ENCODE measurements at regions of chr12 and their contacts with region 1.

Region 1: GRCh38 chr12:32455607-32456071 is 56.3 kb downstream of the FGD4 start:
- DNase-seq: no peak
- H3K4me3 ChIP-seq: peak overlapping the region in 1 of 2 donors; percentile 13
- H3K27ac ChIP-seq: peak overlapping the region; percentile 14 to 68
- H3K4me1 ChIP-seq: no peaks in the 10 kb centered on the region
- H3K27me3 ChIP-seq: no peaks in the 10 kb centered on the region
- CTCF ChIP-seq: peak; percentile 54 to 72 (median 63)
- POLR2A ChIP-seq: no peak

Region 2: DNA sequence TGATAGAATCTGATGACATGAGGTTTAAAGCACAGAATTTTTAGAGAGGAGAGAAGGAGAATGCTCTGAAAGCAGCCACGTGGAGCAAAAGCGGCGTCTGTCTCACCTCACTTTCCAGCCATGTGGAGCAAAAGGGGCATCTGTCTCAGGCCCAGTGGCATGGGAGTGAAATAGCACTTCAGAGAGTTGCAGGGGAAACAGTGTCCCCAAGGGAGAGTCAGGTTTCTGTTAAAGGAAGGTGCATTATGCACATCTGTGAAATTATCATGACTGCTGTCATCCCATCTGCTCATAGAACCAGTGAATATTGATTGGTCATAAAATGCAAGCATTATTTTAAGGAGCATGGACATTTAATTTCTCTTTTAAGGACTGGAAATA is 225.0 kb before region 1 on chr12:
- intact Hi-C with region 1: no loop called
- DNase-seq: no peak
- H3K4me3 ChIP-seq: no peak overlapping the region
- H3K27ac ChIP-seq: no peak overlapping the region
- H3K4me1 ChIP-seq: no peaks in the 10 kb centered on the region
- H3K27me3 ChIP-seq: no peaks in the 10 kb centered on the region
- CTCF ChIP-seq: no peak
- POLR2A ChIP-seq: no peak

Region 3: DNA sequence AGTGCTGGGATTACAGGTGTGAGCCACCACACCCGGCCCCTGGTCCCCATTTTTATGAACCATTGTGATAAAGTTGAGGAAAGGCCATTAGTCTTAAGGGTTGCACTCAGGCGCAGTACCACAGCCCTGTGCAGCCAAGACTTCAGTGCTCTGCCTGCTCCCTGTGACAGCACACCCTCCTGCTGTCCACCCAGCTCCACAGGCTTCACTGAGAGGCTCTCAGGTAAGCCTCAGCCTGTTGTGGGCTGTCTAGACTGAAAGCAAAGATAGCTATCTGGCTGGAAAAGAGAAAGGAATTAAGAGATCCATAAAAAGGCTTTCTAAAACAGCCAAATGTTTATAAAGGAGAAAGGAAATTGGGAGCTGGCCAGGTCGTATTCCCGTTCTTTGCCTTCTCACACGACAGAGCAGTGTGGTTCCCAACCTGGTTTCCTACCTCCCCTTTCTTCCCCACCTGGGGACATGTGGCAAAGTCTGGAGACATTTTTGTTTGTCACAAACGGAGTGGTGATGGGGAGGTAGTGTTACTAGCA is 204.3 kb after region 1 on chr12:
- intact Hi-C with region 1: loop called (anchors 10 kb)
- DNase-seq: no peak
- H3K4me3 ChIP-seq: no peak overlapping the region
- H3K27ac ChIP-seq: peak overlapping the region in 1 of 2 donors; percentile 75
- H3K4me1 ChIP-seq: peaks cover 0 to 5% of the 10 kb centered on the region in 2 donors
- H3K27me3 ChIP-seq: no peaks in the 10 kb centered on the region
- CTCF ChIP-seq: no peak
- POLR2A ChIP-seq: no peak